Prostate gland (tissue), 2 donors: ENCODE measurements at regions of chr21 and their contacts with region 1.

Region 1: GRCh38 chr21:41167348-41168342 is at the start of gene BACE2:
- DNase-seq: peak; percentile 89
- H3K4me3 ChIP-seq: peak within 1 kb of the TSS; percentile 76 to 90
- H3K27ac ChIP-seq: peak within 1 kb of the TSS; percentile 95 to 96
- H3K4me1 ChIP-seq: no peaks in the 10 kb centered on the region
- H3K27me3 ChIP-seq: no peaks in the 10 kb centered on the region
- CTCF ChIP-seq: peak; percentile 74 to 94 (median 86)
- POLR2A ChIP-seq: peak; percentile 66
- total RNA-seq, gene BACE2: 103 to 119 TPM

Region 2: GRCh38 chr21:41419911-41420862 is 252.5 kb after region 1 on chr21:
- intact Hi-C with region 1: loop called (anchors 10 kb)
- DNase-seq: peak; percentile 79
- H3K4me3 ChIP-seq: peak overlapping the region; percentile 56 to 58
- H3K27ac ChIP-seq: peak overlapping the region; percentile 66 to 84
- H3K4me1 ChIP-seq: no peaks in the 10 kb centered on the region
- H3K27me3 ChIP-seq: no peaks in the 10 kb centered on the region
- CTCF ChIP-seq: peak in 1 of 4 experiments; percentile 11
- POLR2A ChIP-seq: peak; percentile 39

Region 3: GRCh38 chr21:41460578-41461527 is 293.2 kb after region 1 on chr21:
- intact Hi-C with region 1: loop called (anchors 5 kb)
- DNase-seq: peak; percentile 80
- H3K4me3 ChIP-seq: no peak overlapping the region
- H3K27ac ChIP-seq: peak overlapping the region; percentile 12 to 29
- H3K4me1 ChIP-seq: no peaks in the 10 kb centered on the region
- H3K27me3 ChIP-seq: no peaks in the 10 kb centered on the region
- CTCF ChIP-seq: peak; percentile 67 to 91 (median 77)
- POLR2A ChIP-seq: no peak

Region 4: GRCh38 chr21:42258153-42258884 is 1090.7 kb after region 1 on chr21:
- intact Hi-C with region 1: no loop called
- DNase-seq: peak; percentile 30
- H3K4me3 ChIP-seq: no peak overlapping the region
- H3K27ac ChIP-seq: no peak overlapping the region
- H3K4me1 ChIP-seq: peaks cover 11% of the 10 kb centered on the region
- H3K27me3 ChIP-seq: no peaks in the 10 kb centered on the region
- CTCF ChIP-seq: peak; percentile 41 to 76 (median 55)
- POLR2A ChIP-seq: no peak